Colonic mucosa (tissue), 4 donors: ENCODE measurements at regions of chr5 and their contacts with region 1.

Region 1: GRCh38 chr5:88689668-88690408 is 193.1 kb downstream of the MEF2C start:
- DNase-seq: no peak
- H3K4me3 ChIP-seq: no peak overlapping the region
- H3K27ac ChIP-seq: no peak overlapping the region
- H3K4me1 ChIP-seq: no peaks in the 10 kb centered on the region
- H3K27me3 ChIP-seq: peaks cover 97% of the 10 kb centered on the region
- CTCF ChIP-seq: no peak

Region 2: DNA sequence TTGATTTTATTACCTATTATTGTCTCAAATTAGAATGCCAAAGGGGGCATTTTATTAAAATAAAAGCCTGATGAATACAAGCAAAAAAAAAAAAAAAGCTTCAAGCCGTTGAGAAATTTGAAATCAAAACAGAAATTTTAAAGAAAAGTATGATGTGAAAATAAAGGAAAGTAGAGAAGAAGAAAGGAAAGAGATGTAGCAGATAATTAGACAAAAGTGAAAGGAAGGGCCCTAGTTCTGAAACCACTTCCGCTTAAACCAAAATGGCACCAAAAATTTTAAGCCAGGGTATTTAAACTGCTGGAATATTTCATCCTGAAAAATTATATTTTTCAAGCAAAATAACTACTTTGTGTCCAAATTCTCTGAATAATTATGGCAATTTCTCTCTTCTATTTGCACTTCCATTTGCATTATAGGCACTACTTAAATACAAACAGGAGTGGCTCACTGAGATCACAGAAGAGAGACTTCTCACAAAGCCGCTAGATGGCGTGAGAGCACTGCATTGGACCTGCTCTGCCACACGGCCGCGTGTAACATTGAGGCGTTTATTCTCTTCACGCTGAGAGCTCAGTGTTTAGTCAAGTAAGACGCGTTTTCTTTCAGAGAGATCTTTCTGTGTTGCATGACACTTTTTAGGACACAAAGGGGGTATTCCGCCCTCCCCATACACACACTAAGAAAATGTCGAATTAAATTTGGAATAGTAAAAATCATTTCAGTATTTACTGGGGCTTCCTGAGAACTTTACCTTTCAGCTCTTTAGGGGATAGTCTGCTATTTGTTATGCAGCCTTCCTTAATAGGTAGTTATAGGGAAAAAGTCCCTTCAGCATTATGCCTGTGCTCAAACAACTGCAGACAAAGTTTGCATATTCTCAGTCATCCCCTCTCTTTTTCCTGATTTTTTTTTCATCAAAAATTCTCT is 908.7 kb before region 1 on chr5:
- intact Hi-C with region 1: loop called (anchors 5 kb)
- DNase-seq: peak; percentile 78
- H3K4me3 ChIP-seq: no peak overlapping the region
- H3K27ac ChIP-seq: no peak overlapping the region
- H3K4me1 ChIP-seq: no peaks in the 10 kb centered on the region
- H3K27me3 ChIP-seq: no peaks in the 10 kb centered on the region
- CTCF ChIP-seq: peak; percentile 81

Region 3: GRCh38 chr5:88140856-88141752 is 548.7 kb before region 1 on chr5:
- intact Hi-C with region 1: loop called (anchors 5 kb)
- DNase-seq: peak; percentile 92
- H3K4me3 ChIP-seq: peak overlapping the region; percentile 33
- H3K27ac ChIP-seq: no peak overlapping the region
- H3K4me1 ChIP-seq: peaks cover 9% of the 10 kb centered on the region
- H3K27me3 ChIP-seq: peaks cover 23% of the 10 kb centered on the region
- CTCF ChIP-seq: peak; percentile 64